Gastrocnemius medialis (tissue), 4 donors: ENCODE measurements at regions of chr17 and their contacts with region 1.

Region 1: GRCh38 chr17:7614422-7615264 is at the start of gene FXR2:
- DNase-seq: peak; percentile 100
- ATAC-seq: peak; percentile 93 to 94
- H3K4me3 ChIP-seq: peak within 1 kb of the TSS; percentile 71 to 95 (median 74)
- H3K27ac ChIP-seq: peak within 1 kb of the TSS; percentile 88 to 98 (median 91)
- H3K4me1 ChIP-seq: peaks cover 37 to 38% of the 10 kb centered on the region in 2 donors
- H3K27me3 ChIP-seq: no peaks in the 10 kb centered on the region
- CTCF ChIP-seq: peak; percentile 41 to 81 (median 65)
- POLR2A ChIP-seq: peak; percentile 97 to 99
- total RNA-seq, gene FXR2: 100 to 174 (median 140) TPM

Region 2: GRCh38 chr17:7572588-7573323 is 41.9 kb before region 1 on chr17:
- in situ Hi-C with region 1: no loop called
- intact Hi-C with region 1: loop called (anchors 2 kb)
- DNase-seq: peak; percentile 99 to 100
- ATAC-seq: peak; percentile 14 to 83
- H3K4me3 ChIP-seq: peak overlapping the region; percentile 90 to 100 (median 95)
- H3K27ac ChIP-seq: peak overlapping the region; percentile 98 to 100 (median 99)
- H3K4me1 ChIP-seq: peaks cover 37 to 42% of the 10 kb centered on the region in 2 donors
- H3K27me3 ChIP-seq: no peaks in the 10 kb centered on the region
- CTCF ChIP-seq: no peak
- POLR2A ChIP-seq: peak; percentile 98 to 99

Region 3: DNA sequence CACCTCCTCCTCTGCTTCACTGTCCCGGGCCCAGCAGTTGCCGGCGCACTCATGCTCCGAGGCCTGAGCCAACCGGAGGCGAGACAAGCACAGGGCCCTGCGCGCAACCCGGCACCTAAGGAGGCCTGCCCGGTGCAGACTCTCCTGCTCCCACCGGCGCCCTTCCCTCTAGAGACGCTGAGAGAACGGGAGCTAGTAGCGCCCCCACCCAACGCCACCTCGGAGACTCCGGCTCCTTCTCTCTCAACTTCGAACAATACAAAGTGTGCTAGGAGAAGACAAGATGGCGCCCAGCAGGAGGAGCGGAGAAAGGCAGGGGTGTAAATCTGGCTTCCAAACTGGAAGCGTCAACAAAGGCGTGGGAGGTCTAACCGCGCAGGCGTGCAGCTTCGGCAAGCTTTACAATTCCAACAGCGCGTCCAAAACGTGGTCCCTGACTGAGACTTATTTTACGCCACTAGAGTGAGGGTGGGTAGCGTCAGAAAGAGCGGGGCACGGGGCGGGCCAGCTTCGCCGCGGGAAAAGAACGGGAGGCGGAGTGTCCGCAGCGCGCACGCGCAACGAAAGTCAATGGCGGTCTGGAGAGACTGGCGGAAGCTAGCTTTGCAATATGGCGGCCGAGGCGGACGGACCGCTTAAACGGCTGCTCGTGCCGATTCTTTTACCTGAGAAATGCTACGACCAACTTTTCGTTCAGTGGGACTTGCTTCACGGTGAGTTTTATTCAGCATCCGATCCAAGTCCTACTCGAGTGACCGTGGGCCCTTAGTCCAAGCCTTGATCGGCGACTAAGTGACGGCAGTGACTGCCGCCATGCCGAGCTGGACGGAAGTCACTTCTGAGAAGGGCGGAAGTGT is 31.2 kb before region 1 on chr17 and contains the start of gene MPDU1:
- in situ Hi-C with region 1: no loop called
- intact Hi-C with region 1: no loop called
- DNase-seq: peak; percentile 95 to 97
- ATAC-seq: peak; percentile 87
- H3K4me3 ChIP-seq: peak within 1 kb of the TSS; percentile 67 to 84 (median 68)
- H3K27ac ChIP-seq: peak within 1 kb of the TSS; percentile 98 to 100 (median 99)
- H3K4me1 ChIP-seq: peaks cover 56 to 59% of the 10 kb centered on the region in 2 donors
- H3K27me3 ChIP-seq: no peaks in the 10 kb centered on the region
- CTCF ChIP-seq: no peak
- POLR2A ChIP-seq: peak; percentile 54 to 73
- total RNA-seq, gene MPDU1: 55.9 to 157 (median 101) TPM

Region 4: DNA sequence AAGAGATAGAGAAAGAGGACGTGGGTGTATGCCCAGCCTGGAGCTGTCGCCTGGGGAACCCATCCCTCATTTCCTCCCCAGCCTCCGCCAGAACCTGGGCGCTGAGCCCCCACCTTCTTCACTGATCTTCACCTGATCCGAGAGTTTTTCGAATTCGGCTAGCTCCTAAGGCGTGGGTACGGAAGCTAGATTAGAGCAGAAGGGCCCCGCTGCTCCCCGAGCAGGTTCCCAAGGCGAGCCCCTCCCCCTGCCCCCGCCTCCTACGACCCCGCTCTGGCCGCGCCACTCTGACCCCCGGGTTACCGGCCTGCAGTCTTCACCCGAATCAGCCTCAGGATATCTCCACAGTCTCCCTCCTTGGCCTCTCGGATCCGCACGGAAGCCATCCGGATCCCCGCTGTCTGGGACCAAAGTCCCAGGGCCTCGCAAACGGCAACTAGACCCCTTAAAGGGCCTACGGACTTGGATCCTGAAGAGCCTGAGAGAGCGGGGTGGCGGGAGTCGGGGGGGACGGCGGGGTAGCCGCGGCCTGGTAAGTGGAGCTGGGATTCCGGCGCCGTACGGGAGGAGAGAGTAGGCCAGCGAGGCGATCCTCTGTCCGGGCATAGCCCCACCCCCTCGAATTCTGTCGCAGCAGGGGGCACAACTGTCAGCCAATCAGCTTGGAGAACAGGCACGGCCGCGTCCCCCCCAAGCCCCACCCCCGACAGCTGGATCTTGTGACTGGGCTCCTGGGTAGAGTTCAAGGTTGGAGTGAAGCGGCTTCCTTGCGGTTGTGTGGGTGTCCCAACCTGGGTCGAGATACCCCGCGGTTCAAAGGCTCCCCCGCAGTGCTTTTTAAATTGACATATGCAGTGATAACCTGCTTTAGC is 12.8 kb after region 1 on chr17 and contains the start of gene SAT2:
- in situ Hi-C with region 1: no loop called
- intact Hi-C with region 1: loop called (anchors 1 kb)
- DNase-seq: peak; percentile 96 to 98
- ATAC-seq: peak; percentile 97 to 98
- H3K4me3 ChIP-seq: peak within 1 kb of the TSS; percentile 74 to 90 (median 80)
- H3K27ac ChIP-seq: peak within 1 kb of the TSS; percentile 93 to 99 (median 96)
- H3K4me1 ChIP-seq: peaks cover 8 to 10% of the 10 kb centered on the region in 2 donors
- H3K27me3 ChIP-seq: no peaks in the 10 kb centered on the region
- CTCF ChIP-seq: no peak
- POLR2A ChIP-seq: peak; percentile 79 to 91
- total RNA-seq, gene SAT2: 38.4 to 79.4 (median 60.4) TPM